Posterior vena cava (tissue), 2 donors: ENCODE measurements at regions of chr1 and their contacts with region 1.

Region 1: DNA sequence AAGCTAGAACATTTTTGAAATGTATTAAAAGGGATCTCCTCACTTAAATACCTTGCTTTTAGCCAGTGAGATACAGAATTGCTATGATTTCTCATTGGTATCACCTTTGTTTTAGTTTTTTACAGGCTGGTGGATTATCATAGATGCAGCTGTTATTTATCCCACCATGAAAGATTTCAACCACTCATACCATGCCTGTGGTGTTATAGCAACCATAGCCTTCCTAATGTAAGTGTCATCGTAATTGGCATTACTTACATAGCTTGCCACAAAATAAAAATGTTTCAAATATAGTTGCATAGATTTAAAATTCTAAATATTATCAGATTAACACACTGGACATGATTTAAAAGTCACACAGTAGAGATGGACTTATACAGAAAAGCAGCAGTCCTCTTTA is 4.7 kb downstream of the TMEM50A start:
- DNase-seq: no peak

Region 2: DNA sequence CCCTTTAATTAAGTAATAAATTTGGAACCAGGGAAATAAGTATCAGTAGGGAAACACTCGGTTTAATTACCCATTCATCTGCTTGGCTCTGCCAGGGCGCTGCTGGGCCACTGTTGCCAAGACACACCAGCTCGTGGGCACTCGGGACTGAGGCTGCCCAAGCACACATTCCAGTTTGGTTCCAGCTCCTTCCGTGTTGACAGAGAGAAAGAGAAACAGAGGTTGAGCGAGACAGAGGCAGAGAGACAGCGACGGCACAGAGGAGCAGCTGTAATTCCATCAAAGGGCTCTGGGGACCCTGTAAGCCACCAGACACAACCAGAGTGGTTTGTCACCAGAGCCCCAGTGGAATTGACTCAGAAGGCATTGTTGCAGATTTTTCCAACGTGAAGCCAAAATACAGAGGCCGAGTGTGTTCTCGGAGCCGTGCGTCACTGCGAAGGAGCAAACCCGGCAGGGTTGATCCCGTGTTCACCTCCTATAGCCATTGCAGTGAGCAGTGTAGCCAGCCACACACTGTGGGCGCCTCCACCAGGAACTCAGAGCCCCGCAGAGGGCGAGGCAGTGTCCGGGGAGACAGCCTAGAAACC is 144.1 kb before region 1 on chr1:
- intact Hi-C with region 1: no loop called
- DNase-seq: peak; percentile 61

Region 3: GRCh38 chr1:25356848-25357247 is 14.0 kb after region 1 on chr1:
- intact Hi-C with region 1: loop called in 1 of 2 experiments (anchors 1 kb)
- DNase-seq: no peak

Region 4: GRCh38 chr1:25442178-25442577 is 99.3 kb after region 1 on chr1:
- intact Hi-C with region 1: no loop called
- DNase-seq: no peak